CD14-positive monocyte (primary cell): ENCODE measurements at regions of chr12 and their contacts with region 1.

Region 1: GRCh38 chr12:11765817-11766794 is 116.6 kb downstream of the ETV6 start:
- DNase-seq: peak; percentile 84 to 96 (median 95)
- H3K4me3 ChIP-seq: peak overlapping the region; percentile 11 to 57 (median 14)
- H3K4me3 Mint-ChIP-seq: peak overlapping the region; percentile 78 to 89
- H3K27ac ChIP-seq: peak overlapping the region; percentile 97
- H3K27ac Mint-ChIP-seq: peak overlapping the region; percentile 99 to 100 (median 99)
- H3K4me1 ChIP-seq: peaks cover 91 to 97% of the 10 kb centered on the region in 2 donors
- H3K4me1 Mint-ChIP-seq: peaks cover 96% of the 10 kb centered on the region
- H3K27me3 ChIP-seq: no peaks in the 10 kb centered on the region
- H3K27me3 Mint-ChIP-seq: no peaks in the 10 kb centered on the region
- CTCF ChIP-seq: no peak

Region 2: DNA sequence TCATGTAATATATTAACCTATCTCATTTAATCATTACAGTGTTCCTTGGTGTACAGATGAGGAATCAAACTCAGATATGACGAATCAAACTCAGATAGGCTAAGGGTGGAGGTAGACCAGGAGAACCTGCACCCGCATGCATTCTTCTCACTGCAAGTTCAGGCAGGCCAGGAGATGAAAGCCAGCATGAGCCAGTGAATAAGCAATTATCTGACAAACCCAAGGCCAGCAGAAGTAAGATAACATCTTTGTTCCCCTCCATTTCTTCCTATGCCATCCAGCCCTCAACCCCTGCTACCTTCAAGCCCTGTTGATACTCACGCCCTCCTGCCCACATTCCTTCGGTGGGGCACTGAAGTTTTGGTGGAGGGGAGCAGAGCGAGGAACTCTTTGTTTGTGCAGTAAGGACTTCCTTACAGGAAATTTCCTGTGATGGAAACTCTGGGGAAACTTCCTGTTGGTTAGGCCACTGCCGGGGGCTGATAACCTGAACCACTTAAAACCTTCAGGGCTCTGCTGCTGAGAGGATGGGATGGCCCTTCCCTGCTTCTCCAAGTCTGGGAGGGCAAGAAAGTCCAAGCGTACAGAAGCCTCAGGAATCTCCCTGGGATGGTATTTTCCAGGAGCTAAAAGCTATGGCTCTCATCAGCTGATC is 35.7 kb after region 1 on chr12:
- intact Hi-C with region 1: loop called in 1 of 2 experiments (anchors 5 kb)
- DNase-seq: peak in 1 of 3 donors; percentile 13
- H3K4me3 ChIP-seq: no peak overlapping the region
- H3K4me3 Mint-ChIP-seq: no peak overlapping the region
- H3K27ac ChIP-seq: peak overlapping the region in 1 of 2 donors; percentile 64
- H3K27ac Mint-ChIP-seq: peak overlapping the region; percentile 26 to 91 (median 67)
- H3K4me1 ChIP-seq: peaks cover 48 to 60% of the 10 kb centered on the region in 2 donors
- H3K4me1 Mint-ChIP-seq: peaks cover 74% of the 10 kb centered on the region
- H3K27me3 ChIP-seq: no peaks in the 10 kb centered on the region
- H3K27me3 Mint-ChIP-seq: no peaks in the 10 kb centered on the region
- CTCF ChIP-seq: no peak